Motor neuron (in vitro differentiated cells): ENCODE measurements at regions of chr18 and their contacts with region 1.

Region 1: GRCh38 chr18:79528846-79529245 is 133.1 kb downstream of the NFATC1 start:
- ATAC-seq: peak; percentile 47 to 85 (median 78)
- H3K4me3 ChIP-seq: no peak overlapping the region
- H3K27ac ChIP-seq: no peak overlapping the region
- H3K4me1 ChIP-seq: peaks cover 0 to 7% of the 10 kb centered on the region in 2 donors

Region 2: DNA sequence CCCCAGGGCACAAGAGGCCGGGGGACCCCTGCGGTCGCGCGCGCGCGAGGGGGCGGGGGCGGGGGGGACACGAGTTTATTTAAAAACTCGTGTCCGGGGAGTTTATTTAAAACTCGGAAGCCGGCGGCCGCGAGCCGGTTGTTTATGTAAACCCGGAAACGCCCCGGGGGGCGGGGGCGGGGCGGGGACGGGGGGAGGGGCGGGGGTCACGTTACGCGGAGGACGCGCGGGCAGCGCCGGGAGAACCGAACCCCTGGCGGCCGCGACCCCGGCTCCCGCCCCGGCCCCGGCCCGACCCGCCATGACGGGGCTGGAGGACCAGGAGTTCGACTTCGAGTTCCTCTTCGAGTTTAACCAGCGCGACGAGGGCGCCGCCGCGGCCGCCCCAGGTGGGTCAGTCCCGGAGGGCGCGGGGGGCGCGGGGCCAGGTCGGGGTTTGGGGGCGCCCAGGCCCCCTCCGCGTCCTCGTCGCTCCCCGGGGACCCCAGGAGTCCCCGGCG is 128.7 kb before region 1 on chr18:
- in situ Hi-C with region 1: loop called in 3 of 9 experiments (anchors 25 kb)
- ATAC-seq: peak in 1 of 8 experiments; percentile 1
- H3K4me3 ChIP-seq: peak overlapping the region in 4 of 5 donors; percentile 16 to 35 (median 31)
- H3K27ac ChIP-seq: no peak overlapping the region
- H3K4me1 ChIP-seq: peaks cover 5 to 23% of the 10 kb centered on the region in 2 donors